ENCODE measurements at regions of chr19 and their contacts with region 1.

Region 1: DNA sequence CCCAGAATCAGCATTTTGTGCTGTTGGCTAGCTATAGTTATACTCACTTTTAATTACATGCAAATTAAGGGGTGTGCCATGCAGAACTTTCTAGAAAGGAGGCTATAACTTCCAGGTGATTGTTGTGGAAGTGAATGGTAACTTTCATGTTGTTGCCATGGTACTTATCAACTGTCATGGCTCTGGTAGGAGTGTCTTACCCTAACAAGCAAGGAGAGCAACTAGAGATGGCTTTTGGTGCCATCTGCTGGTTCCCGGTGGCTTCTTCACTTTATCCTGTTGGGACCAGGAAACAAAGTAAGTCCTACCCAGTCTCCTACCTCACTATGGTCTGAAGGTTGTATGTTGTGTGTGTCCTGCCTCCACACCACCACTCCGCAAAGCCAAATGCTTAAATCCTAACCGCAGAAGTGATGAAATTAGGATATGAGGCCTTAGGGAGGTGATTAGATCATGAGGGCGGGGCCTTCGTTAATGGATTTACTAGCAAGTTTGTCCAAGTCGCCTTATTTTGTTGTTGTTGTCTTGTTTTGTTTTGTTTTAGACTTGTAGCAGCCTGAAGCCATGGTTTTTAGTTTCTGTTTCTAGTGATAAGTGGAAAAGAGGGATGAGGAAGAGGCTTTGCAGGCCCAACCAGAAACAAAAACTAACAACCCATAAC is 22.6 kb downstream of the FBXL12 start:
- DNase-seq: peak; percentile 66 to 95 (median 87)
- ATAC-seq: peak; percentile 23
- H3K4me3 ChIP-seq: no peak overlapping the region
- H3K4me3 Mint-ChIP-seq: no peak overlapping the region
- H3K27ac ChIP-seq: peak overlapping the region; percentile 64 to 80
- H3K27ac Mint-ChIP-seq: peak overlapping the region; percentile 64
- H3K4me1 ChIP-seq: peaks cover 22% of the 10 kb centered on the region
- H3K4me1 Mint-ChIP-seq: peaks cover 27% of the 10 kb centered on the region
- H3K27me3 ChIP-seq: no peaks in the 10 kb centered on the region
- H3K27me3 Mint-ChIP-seq: no peaks in the 10 kb centered on the region
- CTCF ChIP-seq: peak; percentile 67

Region 2: DNA sequence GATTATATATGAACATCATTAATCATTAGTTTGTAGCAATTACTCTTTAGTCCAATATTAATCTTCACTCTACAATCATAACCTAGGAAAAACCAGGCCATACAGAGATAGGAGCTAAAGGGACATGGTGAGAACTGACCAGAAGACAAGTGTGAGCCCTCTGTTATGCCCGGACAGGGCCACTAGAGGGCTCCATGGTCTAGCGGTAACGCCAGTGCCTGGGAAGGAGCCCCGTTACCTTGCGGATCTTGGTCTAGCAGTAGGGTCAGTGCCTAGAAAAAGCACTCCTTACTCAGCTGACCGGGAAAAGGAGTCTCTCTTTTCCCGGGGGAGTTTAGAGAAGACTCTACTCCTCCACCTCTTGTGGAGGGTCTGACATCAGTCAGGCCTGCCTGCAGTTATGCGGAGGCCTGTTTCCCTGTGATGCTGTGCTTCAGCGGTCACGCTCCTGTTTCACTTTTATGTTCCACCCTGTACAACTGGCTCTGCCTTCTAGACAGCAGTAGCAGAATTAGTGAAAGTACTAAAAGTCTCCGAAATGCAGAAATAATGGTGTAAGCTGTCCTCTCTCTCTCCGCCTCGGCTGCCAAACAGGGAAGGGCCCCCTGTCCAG is 590.6 kb before region 1 on chr19:
- CTCF ChIA-PET with region 1: interaction called, 6 read pairs
- POLR2A ChIA-PET with region 1: no interaction called
- intact Hi-C with region 1: loop called in 1 of 2 experiments (anchors 1 kb)
- DNase-seq: peak; percentile 32 to 79 (median 65)
- ATAC-seq: peak; percentile 71
- H3K4me3 ChIP-seq: peak overlapping the region in 1 of 2 experiments; percentile 32
- H3K4me3 Mint-ChIP-seq: peak overlapping the region; percentile 60
- H3K27ac ChIP-seq: no peak overlapping the region
- H3K27ac Mint-ChIP-seq: no peak overlapping the region
- H3K4me1 ChIP-seq: no peaks in the 10 kb centered on the region
- H3K4me1 Mint-ChIP-seq: peaks cover 6% of the 10 kb centered on the region
- H3K27me3 ChIP-seq: no peaks in the 10 kb centered on the region
- H3K27me3 Mint-ChIP-seq: peaks cover 8% of the 10 kb centered on the region
- CTCF ChIP-seq: peak; percentile 98

Region 3: GRCh38 chr19:9323919-9324583 is 472.2 kb before region 1 on chr19 and contains the start of gene ZNF559:
- CTCF ChIA-PET with region 1: no interaction called
- POLR2A ChIA-PET with region 1: no interaction called
- intact Hi-C with region 1: loop called in 1 of 2 experiments (anchors 5 kb)
- DNase-seq: peak; percentile 95 to 99 (median 98)
- ATAC-seq: peak; percentile 95
- H3K4me3 ChIP-seq: peak within 1 kb of the TSS; percentile 75 to 78
- H3K4me3 Mint-ChIP-seq: peak within 1 kb of the TSS; percentile 88
- H3K27ac ChIP-seq: peak within 1 kb of the TSS; percentile 62 to 83
- H3K27ac Mint-ChIP-seq: peak within 1 kb of the TSS; percentile 87
- H3K4me1 ChIP-seq: peaks cover 12% of the 10 kb centered on the region
- H3K4me1 Mint-ChIP-seq: peaks cover 38% of the 10 kb centered on the region
- H3K27me3 ChIP-seq: no peaks in the 10 kb centered on the region
- H3K27me3 Mint-ChIP-seq: no peaks in the 10 kb centered on the region
- CTCF ChIP-seq: peak; percentile 39
- total RNA-seq, gene ZNF559: 4.0 to 4.5 TPM

Region 4: DNA sequence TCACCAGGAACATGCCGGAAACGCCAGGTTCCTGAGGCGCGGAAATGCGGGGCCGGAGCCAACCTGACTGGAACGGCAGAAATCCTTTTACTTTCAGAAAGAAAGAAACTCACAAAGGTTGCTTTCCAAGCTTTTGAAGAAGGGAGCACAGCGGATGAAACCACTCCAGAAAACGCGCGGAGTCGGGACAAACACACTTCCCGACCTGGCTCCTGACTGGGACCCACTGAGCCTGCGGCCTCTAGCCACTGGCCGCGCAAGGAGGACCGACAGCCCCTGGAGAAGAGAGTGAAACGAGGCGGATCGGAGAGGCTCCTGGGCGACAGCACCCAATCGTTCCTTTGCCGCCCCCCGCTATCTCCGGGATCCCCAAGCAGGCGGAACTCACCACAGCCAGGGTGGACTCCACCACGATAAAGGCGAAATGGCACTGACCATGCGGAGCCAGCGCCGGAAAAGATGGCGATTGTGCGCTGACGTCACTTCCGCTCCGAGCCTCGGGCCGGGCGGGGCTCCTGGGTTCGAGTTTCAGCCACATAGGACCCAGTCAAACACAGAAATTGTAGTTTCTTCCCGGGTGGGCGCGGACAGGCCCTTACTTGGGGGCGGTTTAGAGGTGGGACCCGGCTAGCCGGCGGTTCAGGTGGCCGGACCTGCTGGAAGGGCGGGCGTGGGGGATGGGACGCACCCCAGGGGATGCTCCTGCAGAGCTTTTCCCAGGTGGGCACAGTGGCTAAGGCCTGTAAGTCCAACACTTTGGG is 212.0 kb before region 1 on chr19 and contains the start of gene ZNF121:
- CTCF ChIA-PET with region 1: interaction called, 4 read pairs
- POLR2A ChIA-PET with region 1: no interaction called
- intact Hi-C with region 1: loop called (anchors 1 kb)
- DNase-seq: peak; percentile 57 to 89 (median 81)
- ATAC-seq: peak; percentile 75
- H3K4me3 ChIP-seq: peak within 1 kb of the TSS; percentile 95 to 98
- H3K4me3 Mint-ChIP-seq: peak within 1 kb of the TSS; percentile 95
- H3K27ac ChIP-seq: peak within 1 kb of the TSS; percentile 96 to 97
- H3K27ac Mint-ChIP-seq: peak within 1 kb of the TSS; percentile 95
- H3K4me1 ChIP-seq: peaks cover 21% of the 10 kb centered on the region
- H3K4me1 Mint-ChIP-seq: peaks cover 39% of the 10 kb centered on the region
- H3K27me3 ChIP-seq: no peaks in the 10 kb centered on the region
- H3K27me3 Mint-ChIP-seq: peaks cover 2% of the 10 kb centered on the region
- CTCF ChIP-seq: no peak
- total RNA-seq, gene ZNF121: 40.6 to 43.2 TPM

Region 5: GRCh38 chr19:9674663-9675357 is 121.4 kb before region 1 on chr19 and contains the start of gene ZNF562:
- CTCF ChIA-PET with region 1: no interaction called
- POLR2A ChIA-PET with region 1: no interaction called
- intact Hi-C with region 1: loop called (anchors 1 to 5 kb)
- DNase-seq: peak; percentile 60 to 89 (median 81)
- ATAC-seq: peak; percentile 81
- H3K4me3 ChIP-seq: peak within 1 kb of the TSS; percentile 65 to 90
- H3K4me3 Mint-ChIP-seq: peak within 1 kb of the TSS; percentile 97
- H3K27ac ChIP-seq: peak within 1 kb of the TSS; percentile 80 to 84
- H3K27ac Mint-ChIP-seq: peak within 1 kb of the TSS; percentile 99
- H3K4me1 ChIP-seq: no peaks in the 10 kb centered on the region
- H3K4me1 Mint-ChIP-seq: peaks cover 23% of the 10 kb centered on the region
- H3K27me3 ChIP-seq: no peaks in the 10 kb centered on the region
- H3K27me3 Mint-ChIP-seq: no peaks in the 10 kb centered on the region
- CTCF ChIP-seq: no peak
- total RNA-seq, gene ZNF562: 13.6 to 16.5 TPM

Region 6: GRCh38 chr19:9785367-9786331 is 10.6 kb before region 1 on chr19:
- CTCF ChIA-PET with region 1: interaction called, 3 read pairs
- POLR2A ChIA-PET with region 1: no interaction called
- intact Hi-C with region 1: loop called in 1 of 2 experiments (anchors 1 kb)
- DNase-seq: peak; percentile 90 to 98 (median 97)
- ATAC-seq: peak; percentile 82
- H3K4me3 ChIP-seq: peak overlapping the region; percentile 95 to 97
- H3K4me3 Mint-ChIP-seq: peak overlapping the region; percentile 88
- H3K27ac ChIP-seq: peak overlapping the region; percentile 87 to 98
- H3K27ac Mint-ChIP-seq: peak overlapping the region; percentile 95
- H3K4me1 ChIP-seq: peaks cover 10% of the 10 kb centered on the region
- H3K4me1 Mint-ChIP-seq: peaks cover 29% of the 10 kb centered on the region
- H3K27me3 ChIP-seq: no peaks in the 10 kb centered on the region
- H3K27me3 Mint-ChIP-seq: no peaks in the 10 kb centered on the region
- CTCF ChIP-seq: no peak

Region 7: DNA sequence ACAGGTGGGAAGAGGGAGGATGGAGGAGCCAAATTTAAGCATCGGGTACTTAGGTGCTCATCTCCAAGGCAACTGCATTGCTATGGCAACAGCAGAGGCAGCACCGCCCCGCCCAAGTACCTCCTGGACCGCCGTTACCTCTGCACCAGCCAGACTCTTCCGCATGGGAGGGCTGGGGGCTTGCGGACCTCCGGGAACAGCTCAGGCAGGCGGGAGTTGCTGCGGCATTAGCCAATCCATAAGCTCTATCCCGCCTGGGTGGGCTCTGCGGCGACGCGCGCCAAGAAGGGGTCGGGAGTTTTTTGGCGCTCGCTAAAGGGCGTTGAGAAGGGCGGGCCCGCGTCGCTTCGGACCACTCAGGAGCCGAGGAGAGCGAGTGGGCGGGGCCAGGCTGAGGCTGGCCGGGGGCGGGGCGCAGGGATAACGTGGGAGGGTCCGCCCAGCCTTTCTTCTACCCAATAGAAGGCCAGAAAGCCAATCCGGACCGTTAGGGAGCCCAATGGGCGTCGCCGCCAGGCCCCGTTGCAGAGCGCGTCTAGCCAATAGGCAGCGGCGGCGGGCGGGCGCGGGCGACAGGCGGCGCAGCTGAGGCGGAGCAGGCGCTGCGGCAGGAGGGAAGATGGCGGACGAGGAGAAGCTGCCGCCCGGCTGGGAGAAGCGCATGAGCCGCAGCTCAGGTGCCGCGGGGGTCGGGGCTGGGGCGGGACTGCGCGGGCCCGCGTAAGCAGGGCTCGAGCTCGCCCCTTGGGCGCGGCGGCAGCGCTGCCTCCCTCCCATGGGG is 38.7 kb after region 1 on chr19 and contains the start of gene PIN1:
- CTCF ChIA-PET with region 1: no interaction called
- POLR2A ChIA-PET with region 1: no interaction called
- intact Hi-C with region 1: loop called (anchors 1 kb)
- DNase-seq: peak; percentile 98 to 100 (median 99)
- ATAC-seq: peak; percentile 95
- H3K4me3 ChIP-seq: peak within 1 kb of the TSS; percentile 71 to 94
- H3K4me3 Mint-ChIP-seq: peak within 1 kb of the TSS; percentile 90
- H3K27ac ChIP-seq: peak within 1 kb of the TSS; percentile 78 to 80
- H3K27ac Mint-ChIP-seq: peak within 1 kb of the TSS; percentile 94
- H3K4me1 ChIP-seq: peaks cover 15% of the 10 kb centered on the region
- H3K4me1 Mint-ChIP-seq: peaks cover 22% of the 10 kb centered on the region
- H3K27me3 ChIP-seq: no peaks in the 10 kb centered on the region
- H3K27me3 Mint-ChIP-seq: no peaks in the 10 kb centered on the region
- CTCF ChIP-seq: no peak
- total RNA-seq, gene PIN1: 42.4 to 42.7 TPM

Region 8: DNA sequence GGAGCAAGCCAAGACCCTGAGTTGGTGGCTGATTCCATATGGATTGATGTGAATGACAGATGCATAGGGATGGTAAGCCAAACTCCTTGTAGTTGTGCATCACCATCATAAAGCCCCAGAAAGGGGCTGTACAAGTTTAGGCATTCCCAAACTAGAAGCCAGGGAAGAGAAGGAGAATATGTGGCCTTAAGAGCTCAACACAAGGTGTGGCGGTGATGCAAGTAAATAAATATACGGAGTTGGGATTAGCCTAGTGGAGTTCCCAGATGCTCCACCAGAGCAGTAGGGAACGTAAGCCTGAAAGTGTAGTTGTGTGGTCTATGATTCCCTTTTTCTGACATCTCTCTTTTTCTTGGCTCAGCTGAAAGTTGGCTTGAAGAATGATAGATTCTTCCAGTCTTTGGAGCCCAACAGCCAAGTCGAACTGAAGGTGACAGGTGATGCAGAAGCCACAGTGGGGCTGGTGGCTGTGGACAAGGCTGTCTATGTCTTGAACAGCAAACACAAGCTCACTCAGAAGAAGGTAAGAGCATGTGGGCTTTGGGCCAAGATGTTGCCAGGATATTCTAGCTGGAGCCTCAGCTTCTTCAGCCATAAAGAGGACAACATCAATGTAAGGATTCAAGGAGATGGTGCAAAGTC is 247.2 kb after region 1 on chr19:
- CTCF ChIA-PET with region 1: no interaction called
- POLR2A ChIA-PET with region 1: no interaction called
- intact Hi-C with region 1: no loop called
- DNase-seq: no peak
- ATAC-seq: no peak
- H3K4me3 ChIP-seq: no peak overlapping the region
- H3K4me3 Mint-ChIP-seq: no peak overlapping the region
- H3K27ac ChIP-seq: no peak overlapping the region
- H3K27ac Mint-ChIP-seq: no peak overlapping the region
- H3K4me1 ChIP-seq: no peaks in the 10 kb centered on the region
- H3K4me1 Mint-ChIP-seq: no peaks in the 10 kb centered on the region
- H3K27me3 ChIP-seq: no peaks in the 10 kb centered on the region
- H3K27me3 Mint-ChIP-seq: peaks cover 29% of the 10 kb centered on the region
- CTCF ChIP-seq: no peak

Measured in CD8-positive, alpha-beta T cell (primary cell).